ENCODE measurements at regions of chr4 and their contacts with region 1.

Region 1: GRCh38 chr4:15805583-15806517 is 27.7 kb downstream of the CD38 start:
- DNase-seq: peak; percentile 61
- ATAC-seq: peak; percentile 81
- H3K4me3 Mint-ChIP-seq: no peak overlapping the region
- H3K27ac Mint-ChIP-seq: no peak overlapping the region
- H3K4me1 Mint-ChIP-seq: peaks cover 19% of the 10 kb centered on the region
- H3K27me3 Mint-ChIP-seq: no peaks in the 10 kb centered on the region
- CTCF ChIP-seq: peak; percentile 78

Region 2: DNA sequence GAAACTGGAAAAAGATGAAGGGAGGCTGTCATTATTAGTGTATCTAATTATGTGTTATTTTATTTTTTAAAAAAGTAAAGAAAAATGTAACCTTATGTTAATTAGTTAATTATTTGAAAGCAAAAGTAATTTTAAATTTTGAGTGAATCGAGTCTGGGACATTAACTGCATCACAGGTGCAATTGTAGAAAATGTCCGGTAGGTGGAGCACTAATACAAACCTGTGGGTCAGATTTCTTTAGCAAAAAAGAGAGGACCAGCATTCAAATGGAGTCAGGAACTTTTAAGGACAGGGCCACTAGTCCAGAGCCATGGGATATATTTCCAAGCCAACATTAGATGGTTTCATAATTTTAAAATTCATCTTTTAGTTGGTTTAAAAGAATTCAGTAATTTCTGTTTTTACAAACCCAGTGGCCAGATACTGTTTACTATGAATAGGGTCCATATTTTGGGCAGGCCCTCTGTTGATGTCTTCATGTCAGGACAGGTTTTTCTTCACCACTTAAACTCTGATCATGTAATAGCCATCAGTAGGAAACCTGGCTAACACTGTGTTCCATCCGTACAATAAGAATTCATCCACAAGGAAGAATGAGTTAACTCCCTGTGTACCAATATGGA is 75.8 kb before region 1 on chr4:
- CTCF ChIA-PET with region 1: interaction called, 24 read pairs
- POLR2A ChIA-PET with region 1: no interaction called
- intact Hi-C with region 1: loop called (anchors 5 kb)
- DNase-seq: peak; percentile 43
- ATAC-seq: peak; percentile 76
- H3K4me3 Mint-ChIP-seq: no peak overlapping the region
- H3K27ac Mint-ChIP-seq: no peak overlapping the region
- H3K4me1 Mint-ChIP-seq: peaks cover 18% of the 10 kb centered on the region
- H3K27me3 Mint-ChIP-seq: no peaks in the 10 kb centered on the region
- CTCF ChIP-seq: peak; percentile 94

Region 3: GRCh38 chr4:15756361-15756861 is 49.4 kb before region 1 on chr4:
- CTCF ChIA-PET with region 1: interaction called, 63 read pairs
- POLR2A ChIA-PET with region 1: no interaction called
- intact Hi-C with region 1: no loop called
- DNase-seq: peak; percentile 90
- ATAC-seq: peak; percentile 84
- H3K4me3 Mint-ChIP-seq: peak overlapping the region; percentile 66
- H3K27ac Mint-ChIP-seq: peak overlapping the region; percentile 92
- H3K4me1 Mint-ChIP-seq: peaks cover 47% of the 10 kb centered on the region
- H3K27me3 Mint-ChIP-seq: no peaks in the 10 kb centered on the region
- CTCF ChIP-seq: peak; percentile 73

Region 4: GRCh38 chr4:15794905-15795304 is 10.9 kb before region 1 on chr4:
- CTCF ChIA-PET with region 1: interaction called, 13 read pairs
- POLR2A ChIA-PET with region 1: no interaction called
- intact Hi-C with region 1: no loop called
- DNase-seq: no peak
- ATAC-seq: peak; percentile 81
- H3K4me3 Mint-ChIP-seq: peak overlapping the region; percentile 47
- H3K27ac Mint-ChIP-seq: peak overlapping the region; percentile 81
- H3K4me1 Mint-ChIP-seq: peaks cover 45% of the 10 kb centered on the region
- H3K27me3 Mint-ChIP-seq: no peaks in the 10 kb centered on the region
- CTCF ChIP-seq: no peak

Region 5: GRCh38 chr4:15888515-15888914 is 82.7 kb after region 1 on chr4:
- CTCF ChIA-PET with region 1: interaction called, 115 read pairs
- POLR2A ChIA-PET with region 1: no interaction called
- intact Hi-C with region 1: loop called (anchors 5 kb)
- DNase-seq: peak; percentile 32
- ATAC-seq: peak; percentile 20
- H3K4me3 Mint-ChIP-seq: no peak overlapping the region
- H3K27ac Mint-ChIP-seq: no peak overlapping the region
- H3K4me1 Mint-ChIP-seq: no peaks in the 10 kb centered on the region
- H3K27me3 Mint-ChIP-seq: peaks cover 2% of the 10 kb centered on the region
- CTCF ChIP-seq: no peak

Region 6: GRCh38 chr4:15963001-15963451 is 157.2 kb after region 1 on chr4 and contains the start of gene FGFBP2:
- CTCF ChIA-PET with region 1: interaction called, 27 read pairs
- POLR2A ChIA-PET with region 1: interaction called, 4 read pairs
- intact Hi-C with region 1: no loop called
- DNase-seq: peak; percentile 92
- ATAC-seq: peak; percentile 77
- H3K4me3 Mint-ChIP-seq: peak within 1 kb of the TSS; percentile 59
- H3K27ac Mint-ChIP-seq: peak within 1 kb of the TSS; percentile 86
- H3K4me1 Mint-ChIP-seq: peaks cover 42% of the 10 kb centered on the region
- H3K27me3 Mint-ChIP-seq: peaks cover 2% of the 10 kb centered on the region
- CTCF ChIP-seq: no peak
- total RNA-seq, gene FGFBP2: 6.3 to 8.2 TPM

Region 7: DNA sequence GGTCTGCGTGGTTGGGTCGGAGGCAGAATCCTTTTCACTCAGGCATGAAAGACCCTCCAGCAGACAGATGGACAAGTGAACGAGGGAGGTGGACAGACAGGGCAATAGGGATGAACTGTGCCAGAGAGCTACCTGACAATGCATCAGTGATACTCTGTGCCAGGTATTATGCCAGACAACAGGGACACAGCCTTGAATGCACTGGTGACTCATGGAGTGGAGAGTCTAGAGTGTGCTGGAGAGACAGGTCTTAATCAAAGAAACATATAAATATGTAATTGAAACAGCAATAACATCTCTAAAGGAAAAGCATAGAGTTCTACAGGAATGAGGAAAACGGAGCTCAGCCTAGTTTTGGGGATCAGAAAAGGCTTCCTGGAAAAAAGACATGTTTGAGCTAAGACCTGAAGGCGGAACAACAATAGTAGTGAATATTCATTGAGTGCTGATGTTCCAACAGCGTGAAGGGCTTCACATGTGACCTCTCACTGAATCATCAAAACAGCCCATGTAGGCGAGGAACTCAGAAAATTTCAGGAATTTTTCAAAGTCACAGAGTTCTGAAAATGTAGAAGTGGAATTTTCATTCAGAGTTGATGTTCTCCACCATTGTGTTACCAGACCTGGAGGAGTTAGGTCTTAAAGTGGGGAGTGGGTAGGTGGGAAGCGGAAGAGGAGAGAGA is 177.1 kb after region 1 on chr4:
- CTCF ChIA-PET with region 1: no interaction called
- POLR2A ChIA-PET with region 1: no interaction called
- intact Hi-C with region 1: no loop called
- DNase-seq: no peak
- ATAC-seq: no peak
- H3K4me3 Mint-ChIP-seq: no peak overlapping the region
- H3K27ac Mint-ChIP-seq: no peak overlapping the region
- H3K4me1 Mint-ChIP-seq: no peaks in the 10 kb centered on the region
- H3K27me3 Mint-ChIP-seq: no peaks in the 10 kb centered on the region
- CTCF ChIP-seq: no peak

Measured in activated CD8-positive, alpha-beta T cell treated with anti-CD3 and anti-CD28 coated beads for 36 hours (primary cell).